ENCODE measurements at regions of chr4 and their contacts with region 1.

Region 1: GRCh38 chr4:142405021-142405694 is 440.9 kb downstream of the INPP4B start:
- DNase-seq: peak; percentile 78
- ATAC-seq: peak; percentile 50
- H3K4me3 Mint-ChIP-seq: peak overlapping the region; percentile 87
- H3K27ac Mint-ChIP-seq: peak overlapping the region; percentile 99
- H3K4me1 Mint-ChIP-seq: peaks cover 51% of the 10 kb centered on the region
- H3K27me3 Mint-ChIP-seq: no peaks in the 10 kb centered on the region

Region 2: DNA sequence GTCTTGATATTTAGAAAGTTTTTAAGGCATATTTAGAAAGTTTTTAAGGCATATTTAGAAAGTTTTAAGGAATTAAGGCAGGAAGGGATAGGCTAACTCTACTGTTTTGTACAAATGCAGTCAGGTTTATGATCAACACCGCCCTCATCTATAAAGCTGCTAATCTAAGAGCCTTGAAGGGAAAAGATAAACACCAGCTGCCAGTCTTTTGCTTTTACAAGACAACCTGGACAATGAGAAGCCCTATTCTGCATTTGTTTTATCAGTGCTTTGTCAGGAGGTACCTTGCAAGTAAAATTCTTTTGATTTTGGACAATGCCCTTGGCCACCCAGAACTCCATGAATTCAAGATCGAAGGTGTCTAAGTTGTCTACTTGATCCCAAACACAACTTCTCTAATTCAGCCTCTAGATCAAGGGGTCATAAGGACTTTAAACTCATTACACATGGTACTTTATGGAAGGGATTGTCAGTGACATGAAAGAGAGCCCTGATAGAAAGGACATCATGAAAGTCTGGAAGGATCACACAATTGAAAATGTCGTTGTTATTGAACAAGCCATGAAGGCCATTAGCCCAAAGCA is 729.0 kb before region 1 on chr4:
- CTCF ChIA-PET with region 1: no interaction called
- POLR2A ChIA-PET with region 1: no interaction called
- intact Hi-C with region 1: no loop called
- DNase-seq: no peak
- ATAC-seq: no peak
- H3K4me3 Mint-ChIP-seq: no peak overlapping the region
- H3K27ac Mint-ChIP-seq: no peak overlapping the region
- H3K4me1 Mint-ChIP-seq: no peaks in the 10 kb centered on the region
- H3K27me3 Mint-ChIP-seq: no peaks in the 10 kb centered on the region

Region 3: GRCh38 chr4:141890279-141890678 is 514.9 kb before region 1 on chr4:
- CTCF ChIA-PET with region 1: no interaction called
- POLR2A ChIA-PET with region 1: no interaction called
- intact Hi-C with region 1: no loop called
- DNase-seq: no peak
- ATAC-seq: no peak
- H3K4me3 Mint-ChIP-seq: no peak overlapping the region
- H3K27ac Mint-ChIP-seq: no peak overlapping the region
- H3K4me1 Mint-ChIP-seq: no peaks in the 10 kb centered on the region
- H3K27me3 Mint-ChIP-seq: no peaks in the 10 kb centered on the region

Region 4: GRCh38 chr4:142282870-142283431 is 122.2 kb before region 1 on chr4:
- CTCF ChIA-PET with region 1: interaction called, 3 read pairs
- POLR2A ChIA-PET with region 1: no interaction called
- intact Hi-C with region 1: loop called in 1 of 2 experiments (anchors 5 kb)
- DNase-seq: no peak
- ATAC-seq: no peak
- H3K4me3 Mint-ChIP-seq: no peak overlapping the region
- H3K27ac Mint-ChIP-seq: no peak overlapping the region
- H3K4me1 Mint-ChIP-seq: peaks cover 23% of the 10 kb centered on the region
- H3K27me3 Mint-ChIP-seq: no peaks in the 10 kb centered on the region

Region 5: DNA sequence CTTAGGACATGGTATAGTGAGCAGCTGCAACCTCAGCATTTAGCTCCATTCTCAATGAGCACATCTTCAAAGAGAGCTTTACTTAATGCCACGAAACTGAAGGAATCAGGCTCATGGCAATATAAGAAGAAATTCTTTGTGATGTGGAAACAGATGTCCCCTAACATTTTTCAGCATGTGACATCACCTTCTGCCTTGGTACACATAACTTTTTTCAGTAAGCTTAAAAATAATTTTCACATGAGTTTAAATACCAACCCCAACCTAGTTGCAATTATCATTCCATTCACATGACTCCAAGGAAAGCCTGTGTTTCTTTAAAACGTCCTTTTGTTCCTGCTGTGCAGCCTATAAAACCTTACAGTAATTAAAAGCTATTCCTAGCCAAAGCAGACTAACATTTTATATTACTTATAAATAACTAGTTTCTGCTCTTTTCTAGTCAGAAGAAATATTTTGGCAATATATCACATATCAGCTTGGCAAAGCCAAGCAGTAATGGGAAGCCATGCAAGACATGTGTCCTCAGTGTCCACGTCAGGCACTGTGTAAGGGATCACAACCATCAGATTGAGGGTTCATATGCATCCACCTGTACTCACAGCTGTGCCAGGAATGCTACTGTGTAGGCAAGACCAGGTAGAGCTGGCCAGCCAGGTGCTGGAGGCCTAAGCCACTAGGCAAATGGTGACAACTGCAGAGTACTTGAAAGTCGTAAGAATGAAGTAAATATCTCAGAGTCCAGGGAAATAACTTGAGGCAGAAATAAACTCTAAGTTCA is 25.7 kb before region 1 on chr4:
- CTCF ChIA-PET with region 1: interaction called, 7 read pairs
- POLR2A ChIA-PET with region 1: interaction called, 8 read pairs
- intact Hi-C with region 1: loop called (anchors 1 kb)
- DNase-seq: no peak
- ATAC-seq: no peak
- H3K4me3 Mint-ChIP-seq: no peak overlapping the region
- H3K27ac Mint-ChIP-seq: peak overlapping the region; percentile 93
- H3K4me1 Mint-ChIP-seq: peaks cover 83% of the 10 kb centered on the region
- H3K27me3 Mint-ChIP-seq: no peaks in the 10 kb centered on the region

Region 6: DNA sequence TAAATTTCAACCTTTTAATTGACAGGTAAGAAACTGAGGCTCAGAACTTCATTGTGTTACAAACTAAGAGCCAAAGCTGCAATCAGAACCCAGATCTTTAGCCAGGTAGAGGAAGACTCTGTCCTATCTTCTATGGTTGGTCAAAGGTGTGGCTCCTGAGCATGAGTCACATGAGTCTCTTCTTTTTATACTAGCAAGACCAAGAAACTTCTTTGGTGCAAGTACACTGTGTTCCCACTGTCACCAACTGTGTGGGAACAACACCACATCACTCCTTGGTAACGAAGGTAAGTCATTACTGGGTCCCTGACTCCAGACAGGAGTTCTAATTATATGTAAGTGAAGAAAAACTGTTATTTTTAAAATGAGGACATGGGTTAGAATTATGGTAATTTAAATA is 150.9 kb after region 1 on chr4:
- CTCF ChIA-PET with region 1: interaction called, 4 read pairs
- POLR2A ChIA-PET with region 1: interaction called, 4 read pairs
- intact Hi-C with region 1: loop called (anchors 2 to 5 kb)
- DNase-seq: no peak
- ATAC-seq: peak; percentile 41
- H3K4me3 Mint-ChIP-seq: peak overlapping the region; percentile 57
- H3K27ac Mint-ChIP-seq: peak overlapping the region; percentile 86
- H3K4me1 Mint-ChIP-seq: peaks cover 87% of the 10 kb centered on the region
- H3K27me3 Mint-ChIP-seq: no peaks in the 10 kb centered on the region

Region 7: GRCh38 chr4:142817442-142817841 is 412.3 kb after region 1 on chr4:
- CTCF ChIA-PET with region 1: no interaction called
- POLR2A ChIA-PET with region 1: no interaction called
- intact Hi-C with region 1: loop called in 1 of 2 experiments (anchors 1 kb)
- DNase-seq: peak; percentile 77
- ATAC-seq: peak; percentile 88
- H3K4me3 Mint-ChIP-seq: peak overlapping the region; percentile 18
- H3K27ac Mint-ChIP-seq: peak overlapping the region; percentile 82
- H3K4me1 Mint-ChIP-seq: peaks cover 32% of the 10 kb centered on the region
- H3K27me3 Mint-ChIP-seq: no peaks in the 10 kb centered on the region

Region 8: GRCh38 chr4:143513306-143514168 is 1108.4 kb after region 1 on chr4 and contains the start of gene SMARCA5:
- CTCF ChIA-PET with region 1: no interaction called
- POLR2A ChIA-PET with region 1: no interaction called
- intact Hi-C with region 1: loop called in 1 of 2 experiments (anchors 5 kb)
- DNase-seq: peak; percentile 97
- ATAC-seq: peak; percentile 85
- H3K4me3 Mint-ChIP-seq: peak within 1 kb of the TSS; percentile 100
- H3K27ac Mint-ChIP-seq: peak within 1 kb of the TSS; percentile 99
- H3K4me1 Mint-ChIP-seq: peaks cover 29% of the 10 kb centered on the region
- H3K27me3 Mint-ChIP-seq: no peaks in the 10 kb centered on the region
- total RNA-seq, gene SMARCA5: 66.6 to 69.8 TPM

Region 9: GRCh38 chr4:143558823-143559756 is 1153.9 kb after region 1 on chr4:
- CTCF ChIA-PET with region 1: no interaction called
- POLR2A ChIA-PET with region 1: no interaction called
- intact Hi-C with region 1: no loop called
- DNase-seq: peak; percentile 78
- ATAC-seq: peak; percentile 82
- H3K4me3 Mint-ChIP-seq: peak overlapping the region; percentile 85
- H3K27ac Mint-ChIP-seq: peak overlapping the region; percentile 93
- H3K4me1 Mint-ChIP-seq: peaks cover 29% of the 10 kb centered on the region
- H3K27me3 Mint-ChIP-seq: no peaks in the 10 kb centered on the region